ENCODE measurements at regions of chr2 and their contacts with region 1.

Region 1: GRCh38 chr2:112645310-112646101 is at the start of gene SLC20A1:
- DNase-seq: peak; percentile 98
- H3K4me3 Mint-ChIP-seq: peak within 1 kb of the TSS; percentile 97
- H3K27ac Mint-ChIP-seq: peak within 1 kb of the TSS; percentile 86
- H3K4me1 Mint-ChIP-seq: peaks cover 65% of the 10 kb centered on the region
- H3K27me3 Mint-ChIP-seq: no peaks in the 10 kb centered on the region
- total RNA-seq, gene SLC20A1: 152 to 158 TPM

Region 2: GRCh38 chr2:112542123-112542983 is 103.2 kb before region 1 on chr2 and contains the start of gene POLR1B:
- CTCF ChIA-PET with region 1: no interaction called
- POLR2A ChIA-PET with region 1: no interaction called
- DNase-seq: peak; percentile 80
- H3K4me3 Mint-ChIP-seq: no peak within 1 kb of the TSS
- H3K27ac Mint-ChIP-seq: no peak within 1 kb of the TSS
- H3K4me1 Mint-ChIP-seq: peaks cover 27% of the 10 kb centered on the region
- H3K27me3 Mint-ChIP-seq: no peaks in the 10 kb centered on the region
- total RNA-seq, gene POLR1B: 23.5 to 29.0 TPM

Region 3: GRCh38 chr2:112584134-112584890 is 61.2 kb before region 1 on chr2 and contains the start of gene CHCHD5:
- CTCF ChIA-PET with region 1: interaction called, 7 read pairs
- POLR2A ChIA-PET with region 1: interaction called, 33 read pairs
- DNase-seq: peak; percentile 97
- H3K4me3 Mint-ChIP-seq: peak within 1 kb of the TSS; percentile 97
- H3K27ac Mint-ChIP-seq: peak within 1 kb of the TSS; percentile 95
- H3K4me1 Mint-ChIP-seq: peaks cover 47% of the 10 kb centered on the region
- H3K27me3 Mint-ChIP-seq: no peaks in the 10 kb centered on the region
- total RNA-seq, gene CHCHD5: 40.0 to 47.5 TPM

Region 4: GRCh38 chr2:112626604-112627059 is 18.9 kb before region 1 on chr2:
- CTCF ChIA-PET with region 1: interaction called, 221 read pairs
- POLR2A ChIA-PET with region 1: interaction called, 492 read pairs
- DNase-seq: peak; percentile 75
- H3K4me3 Mint-ChIP-seq: peak overlapping the region; percentile 49
- H3K27ac Mint-ChIP-seq: peak overlapping the region; percentile 93
- H3K4me1 Mint-ChIP-seq: peaks cover 86% of the 10 kb centered on the region
- H3K27me3 Mint-ChIP-seq: no peaks in the 10 kb centered on the region

Region 5: DNA sequence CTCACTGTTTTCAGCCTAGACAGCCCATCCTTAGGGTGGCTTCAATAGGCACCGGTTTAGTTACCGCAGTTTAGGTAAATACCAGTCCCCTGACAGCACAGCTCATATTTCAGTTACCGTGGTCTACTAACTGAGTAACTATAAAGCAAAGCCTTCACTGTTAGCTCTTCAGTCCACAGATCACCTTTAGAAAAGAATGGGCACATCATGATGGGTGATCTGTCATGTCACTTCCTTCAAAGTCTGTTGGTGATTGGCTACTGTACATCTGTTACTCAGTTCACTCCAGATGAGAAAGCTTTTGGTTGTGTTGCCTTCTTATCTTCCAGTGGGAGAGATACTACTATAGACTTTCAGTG is 21.2 kb after region 1 on chr2:
- CTCF ChIA-PET with region 1: no interaction called
- POLR2A ChIA-PET with region 1: interaction called, 30 read pairs
- DNase-seq: no peak
- H3K4me3 Mint-ChIP-seq: no peak overlapping the region
- H3K27ac Mint-ChIP-seq: peak overlapping the region; percentile 14
- H3K4me1 Mint-ChIP-seq: peaks cover 28% of the 10 kb centered on the region
- H3K27me3 Mint-ChIP-seq: no peaks in the 10 kb centered on the region

Region 6: GRCh38 chr2:112692496-112692911 is 47.0 kb after region 1 on chr2:
- CTCF ChIA-PET with region 1: interaction called, 9 read pairs
- POLR2A ChIA-PET with region 1: interaction called, 42 read pairs
- DNase-seq: peak; percentile 86
- H3K4me3 Mint-ChIP-seq: peak overlapping the region; percentile 17
- H3K27ac Mint-ChIP-seq: peak overlapping the region; percentile 90
- H3K4me1 Mint-ChIP-seq: peaks cover 36% of the 10 kb centered on the region
- H3K27me3 Mint-ChIP-seq: no peaks in the 10 kb centered on the region

Region 7: GRCh38 chr2:112821142-112821541 is 175.6 kb after region 1 on chr2:
- CTCF ChIA-PET with region 1: no interaction called
- POLR2A ChIA-PET with region 1: no interaction called
- DNase-seq: peak; percentile 69
- H3K4me3 Mint-ChIP-seq: no peak overlapping the region
- H3K27ac Mint-ChIP-seq: peak overlapping the region; percentile 69
- H3K4me1 Mint-ChIP-seq: peaks cover 42% of the 10 kb centered on the region
- H3K27me3 Mint-ChIP-seq: no peaks in the 10 kb centered on the region